ENCODE measurements at regions of chr2 and their contacts with region 1.

Region 1: DNA sequence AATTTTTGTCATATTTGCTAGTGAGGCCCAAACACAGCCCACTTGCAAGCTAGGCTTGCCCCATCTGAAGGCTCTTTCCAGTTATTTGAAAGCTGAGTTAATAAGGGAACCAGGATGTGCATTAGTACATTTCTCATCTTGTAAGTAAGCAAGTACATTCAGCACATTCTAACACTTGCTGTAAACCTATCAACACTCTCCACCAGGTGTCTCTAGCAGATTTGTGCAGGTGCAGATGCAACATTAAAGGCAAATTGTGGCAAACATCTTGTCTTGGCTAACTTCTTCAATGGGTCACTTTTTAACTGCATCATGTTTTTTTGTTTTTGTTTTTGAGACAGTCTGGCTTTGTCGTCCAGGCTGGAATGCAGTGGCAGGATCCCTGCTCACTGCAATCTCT is 25.3 kb upstream of the MFSD6 start:
- DNase-seq: no peak
- H3K4me3 ChIP-seq: no peak overlapping the region
- H3K27ac ChIP-seq: no peak overlapping the region
- H3K4me1 ChIP-seq: no peaks in the 10 kb centered on the region
- H3K27me3 ChIP-seq: no peaks in the 10 kb centered on the region
- CTCF ChIP-seq: peak; percentile 35 to 71 (median 61)
- POLR2A ChIP-seq: no peak

Region 2: DNA sequence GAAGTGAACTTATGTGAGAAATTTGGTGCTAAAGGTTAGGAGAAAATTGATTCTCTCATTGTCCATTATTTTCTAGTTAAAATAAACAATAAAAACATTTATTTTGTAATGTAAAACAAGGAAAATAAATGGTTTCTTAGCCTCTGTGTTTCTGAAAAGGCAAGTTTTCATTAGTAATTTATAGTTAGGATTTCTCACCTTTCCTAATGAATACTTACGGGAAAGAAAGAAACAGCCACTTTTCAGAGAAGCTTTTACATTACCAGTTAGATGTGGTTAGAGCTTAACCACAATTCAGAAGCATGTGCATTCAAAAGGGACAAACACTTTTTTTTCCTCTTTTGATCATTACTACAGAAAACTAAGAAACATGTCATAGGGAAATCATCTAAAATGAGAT is 132.8 kb after region 1 on chr2:
- intact Hi-C with region 1: loop called (anchors 5 kb)
- DNase-seq: no peak
- H3K4me3 ChIP-seq: no peak overlapping the region
- H3K27ac ChIP-seq: no peak overlapping the region
- H3K4me1 ChIP-seq: peaks cover 0 to 13% (median 4%) of the 10 kb centered on the region in 6 donors
- H3K27me3 ChIP-seq: no peaks in the 10 kb centered on the region
- CTCF ChIP-seq: no peak
- POLR2A ChIP-seq: no peak

Region 3: DNA sequence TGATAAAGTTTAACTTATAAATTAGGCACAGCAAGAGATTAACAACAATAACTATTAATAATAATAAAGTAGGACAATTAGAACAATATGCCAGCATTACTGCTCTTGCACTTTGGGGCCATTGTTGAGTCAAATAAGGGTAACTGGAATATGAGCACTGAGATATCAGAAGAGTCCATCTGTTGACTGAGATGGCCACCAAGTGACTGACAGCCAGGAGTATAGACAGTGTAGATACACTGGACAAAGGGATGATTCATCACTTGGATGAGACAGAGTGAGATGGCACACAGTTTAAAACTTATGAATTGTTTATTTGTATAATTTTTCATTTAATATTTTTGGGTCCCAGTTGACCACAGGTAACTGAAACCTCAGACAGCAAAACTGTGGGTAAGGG is 286.0 kb after region 1 on chr2:
- intact Hi-C with region 1: loop called (anchors 10 kb)
- DNase-seq: no peak
- H3K4me3 ChIP-seq: no peak overlapping the region
- H3K27ac ChIP-seq: no peak overlapping the region
- H3K4me1 ChIP-seq: peaks cover 0 to 15% (median 0%) of the 10 kb centered on the region in 6 donors
- H3K27me3 ChIP-seq: no peaks in the 10 kb centered on the region
- CTCF ChIP-seq: no peak
- POLR2A ChIP-seq: no peak

Measured in spleen (tissue), 13 donors.